ENCODE measurements at regions of chr18 and their contacts with region 1.

Region 1: DNA sequence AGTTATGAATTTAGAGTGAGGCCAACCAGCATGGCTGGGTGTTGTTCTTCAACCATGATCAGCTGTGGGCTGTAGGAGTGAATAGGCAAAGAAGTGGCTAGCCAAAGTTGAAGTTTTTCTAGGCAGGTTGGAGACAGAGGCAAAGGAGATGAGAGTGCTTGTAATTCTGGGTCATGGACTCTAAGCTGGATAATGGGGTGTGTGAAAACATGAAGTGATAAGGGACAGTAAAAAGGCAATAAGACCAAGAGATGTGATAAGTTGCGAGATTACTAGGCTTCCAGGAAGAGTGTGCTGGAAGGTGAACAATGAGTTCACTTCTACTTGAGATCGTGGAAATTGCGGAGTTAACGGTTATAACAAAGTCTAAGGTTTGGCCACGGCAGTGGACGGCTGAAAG is 118.6 kb upstream of the RNF152 start:
- DNase-seq: no peak
- H3K4me3 ChIP-seq: no peak overlapping the region
- H3K27ac ChIP-seq: no peak overlapping the region
- H3K4me1 ChIP-seq: no peaks in the 10 kb centered on the region
- H3K27me3 ChIP-seq: no peaks in the 10 kb centered on the region
- CTCF ChIP-seq: no peak
- EP300 ChIP-seq: no peak
- POLR2A ChIP-seq: no peak

Region 2: DNA sequence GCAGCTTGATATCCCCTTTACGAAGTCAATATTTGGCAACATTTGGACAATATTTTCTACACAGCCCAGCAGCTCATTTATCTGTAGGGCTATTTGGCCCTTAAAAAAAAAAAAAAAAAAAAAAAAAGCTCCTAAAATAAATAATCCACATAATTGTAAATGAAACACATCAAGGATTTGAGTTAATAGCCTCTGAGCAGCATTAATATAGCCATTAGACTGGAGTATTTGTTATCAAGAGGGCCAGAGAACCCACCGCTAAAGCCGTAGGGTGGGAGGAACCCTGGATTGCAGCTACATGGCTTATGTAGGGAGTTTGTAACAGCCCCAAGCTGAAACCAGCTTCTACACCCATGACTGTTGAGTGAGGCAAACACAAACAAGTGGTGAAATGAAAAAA is 203.1 kb before region 1 on chr18:
- in situ Hi-C with region 1: no loop called
- intact Hi-C with region 1: no loop called
- DNase-seq: no peak
- H3K4me3 ChIP-seq: no peak overlapping the region
- H3K27ac ChIP-seq: no peak overlapping the region
- H3K4me1 ChIP-seq: no peaks in the 10 kb centered on the region
- H3K27me3 ChIP-seq: no peaks in the 10 kb centered on the region
- CTCF ChIP-seq: no peak
- EP300 ChIP-seq: no peak
- POLR2A ChIP-seq: no peak

Region 3: DNA sequence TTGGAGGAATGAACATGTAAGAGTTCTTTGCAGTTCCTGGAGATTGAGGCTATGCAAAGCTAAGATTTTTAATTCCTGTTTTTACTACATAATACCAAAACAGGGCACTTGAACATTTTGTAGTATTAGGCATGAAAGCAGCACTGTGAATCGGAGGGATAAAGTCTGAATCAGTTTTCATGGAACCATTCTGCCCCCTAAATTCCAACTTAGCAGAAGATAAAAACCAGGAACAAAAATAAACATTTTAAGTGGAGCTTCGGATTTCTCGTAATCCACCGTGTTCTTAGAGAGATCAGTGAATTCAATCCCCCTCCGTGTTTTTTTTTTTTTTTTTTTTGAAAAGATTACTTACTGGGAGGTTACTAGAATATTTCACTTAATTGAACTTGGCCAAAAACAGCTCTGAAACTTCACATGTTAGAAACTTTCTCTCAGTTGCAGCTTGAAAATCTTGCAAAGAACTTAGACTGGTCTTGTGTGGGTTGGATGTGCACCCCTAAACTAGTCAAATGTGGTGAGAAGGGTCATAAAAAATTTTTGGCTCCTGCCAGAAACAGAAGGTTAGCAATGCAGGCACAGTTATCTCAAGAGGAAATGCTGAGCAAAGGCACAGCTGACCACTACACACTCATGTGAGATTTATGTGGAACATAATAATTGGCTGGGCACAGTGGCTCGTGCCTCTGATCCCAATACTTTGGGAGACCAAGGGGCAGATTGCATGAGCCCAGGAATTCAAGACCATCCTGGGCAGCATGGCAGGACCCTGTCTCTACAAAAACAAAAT is 26.8 kb after region 1 on chr18:
- in situ Hi-C with region 1: no loop called
- intact Hi-C with region 1: no loop called
- DNase-seq: no peak
- H3K4me3 ChIP-seq: no peak overlapping the region
- H3K27ac ChIP-seq: no peak overlapping the region
- H3K4me1 ChIP-seq: peaks cover 0 to 4% (median 0%) of the 10 kb centered on the region in 4 donors
- H3K27me3 ChIP-seq: no peaks in the 10 kb centered on the region
- CTCF ChIP-seq: no peak
- EP300 ChIP-seq: no peak
- POLR2A ChIP-seq: no peak

Region 4: GRCh38 chr18:62048279-62048678 is 36.9 kb after region 1 on chr18:
- in situ Hi-C with region 1: no loop called
- intact Hi-C with region 1: no loop called
- DNase-seq: no peak
- H3K4me3 ChIP-seq: no peak overlapping the region
- H3K27ac ChIP-seq: no peak overlapping the region
- H3K4me1 ChIP-seq: no peaks in the 10 kb centered on the region
- H3K27me3 ChIP-seq: no peaks in the 10 kb centered on the region
- CTCF ChIP-seq: no peak
- EP300 ChIP-seq: no peak
- POLR2A ChIP-seq: no peak

Region 5: GRCh38 chr18:62526098-62527025 is 514.9 kb after region 1 on chr18:
- in situ Hi-C with region 1: no loop called
- intact Hi-C with region 1: loop called (anchors 5 kb)
- DNase-seq: peak; percentile 84
- H3K4me3 ChIP-seq: peak overlapping the region; percentile 44 to 95 (median 80)
- H3K27ac ChIP-seq: peak overlapping the region; percentile 92 to 99 (median 98)
- H3K4me1 ChIP-seq: peaks cover 7 to 37% (median 20%) of the 10 kb centered on the region in 4 donors
- H3K27me3 ChIP-seq: no peaks in the 10 kb centered on the region
- CTCF ChIP-seq: no peak
- EP300 ChIP-seq: no peak
- POLR2A ChIP-seq: peak; percentile 73

Measured in transverse colon (tissue), 4 donors.